ENCODE measurements at regions of chr17 and their contacts with region 1.

Region 1: GRCh38 chr17:56230660-56231059 is 77.4 kb downstream of the ANKFN1 start:
- DNase-seq: no peak
- ATAC-seq: no peak
- H3K4me3 Mint-ChIP-seq: no peak overlapping the region
- H3K27ac Mint-ChIP-seq: no peak overlapping the region
- H3K4me1 Mint-ChIP-seq: no peaks in the 10 kb centered on the region
- H3K27me3 Mint-ChIP-seq: peaks cover 0 to 3% (median 2%) of the 10 kb centered on the region in 5 donors

Region 2: DNA sequence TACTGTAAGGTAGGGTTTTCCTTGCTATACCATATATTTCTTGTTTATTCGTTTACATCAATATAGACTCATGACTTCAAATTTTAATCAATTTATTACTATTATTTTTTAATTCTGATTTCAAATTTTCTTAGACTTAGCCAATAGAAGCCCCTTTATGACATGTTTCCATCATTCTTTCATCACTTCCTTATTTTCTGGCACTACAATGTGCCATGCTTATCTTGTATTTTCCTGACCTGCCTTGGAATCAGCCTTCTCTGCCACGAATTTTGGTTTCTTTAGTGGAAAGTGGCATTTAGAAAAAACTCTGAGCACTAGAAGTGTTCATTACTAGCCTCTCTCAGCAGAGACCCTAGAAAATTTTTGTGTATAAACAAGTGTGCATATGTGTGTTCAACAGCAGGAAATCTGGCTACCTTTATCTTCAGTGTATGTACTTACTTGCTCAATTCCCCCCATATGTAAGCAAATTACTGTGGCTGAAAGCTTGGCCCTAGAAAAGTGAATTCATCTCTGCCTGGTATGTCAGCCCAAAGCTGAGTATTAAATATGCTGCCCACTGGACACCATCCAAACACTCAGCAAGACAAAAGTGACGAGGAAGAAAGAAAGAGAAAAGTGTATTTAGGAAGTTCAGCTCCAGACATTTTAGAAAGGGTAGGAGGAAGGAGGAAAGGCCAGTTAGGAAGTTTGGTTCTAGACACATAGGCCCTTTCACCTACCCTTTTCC is 1258.1 kb before region 1 on chr17:
- POLR2A ChIA-PET with region 1: interaction called, 11 read pairs
- DNase-seq: no peak
- ATAC-seq: no peak
- H3K4me3 Mint-ChIP-seq: no peak overlapping the region
- H3K27ac Mint-ChIP-seq: no peak overlapping the region
- H3K4me1 Mint-ChIP-seq: peaks cover 2 to 22% (median 13%) of the 10 kb centered on the region in 4 donors
- H3K27me3 Mint-ChIP-seq: no peaks in the 10 kb centered on the region

Region 3: GRCh38 chr17:56125830-56126819 is 104.5 kb before region 1 on chr17:
- POLR2A ChIA-PET with region 1: no interaction called
- DNase-seq: peak in 2 of 10 donors; percentile 3 to 11
- ATAC-seq: no peak
- H3K4me3 Mint-ChIP-seq: no peak overlapping the region
- H3K27ac Mint-ChIP-seq: peak overlapping the region in 1 of 10 donors; percentile 46
- H3K4me1 Mint-ChIP-seq: no peaks in the 10 kb centered on the region
- H3K27me3 Mint-ChIP-seq: peaks cover 2 to 15% (median 3%) of the 10 kb centered on the region in 5 donors

Region 4: GRCh38 chr17:56217921-56218320 is 12.7 kb before region 1 on chr17:
- POLR2A ChIA-PET with region 1: no interaction called
- DNase-seq: no peak
- ATAC-seq: no peak
- H3K4me3 Mint-ChIP-seq: no peak overlapping the region
- H3K27ac Mint-ChIP-seq: no peak overlapping the region
- H3K4me1 Mint-ChIP-seq: no peaks in the 10 kb centered on the region
- H3K27me3 Mint-ChIP-seq: peaks cover 0 to 21% (median 4%) of the 10 kb centered on the region in 5 donors